ENCODE measurements at regions of chr22 and their contacts with region 1.

Region 1: DNA sequence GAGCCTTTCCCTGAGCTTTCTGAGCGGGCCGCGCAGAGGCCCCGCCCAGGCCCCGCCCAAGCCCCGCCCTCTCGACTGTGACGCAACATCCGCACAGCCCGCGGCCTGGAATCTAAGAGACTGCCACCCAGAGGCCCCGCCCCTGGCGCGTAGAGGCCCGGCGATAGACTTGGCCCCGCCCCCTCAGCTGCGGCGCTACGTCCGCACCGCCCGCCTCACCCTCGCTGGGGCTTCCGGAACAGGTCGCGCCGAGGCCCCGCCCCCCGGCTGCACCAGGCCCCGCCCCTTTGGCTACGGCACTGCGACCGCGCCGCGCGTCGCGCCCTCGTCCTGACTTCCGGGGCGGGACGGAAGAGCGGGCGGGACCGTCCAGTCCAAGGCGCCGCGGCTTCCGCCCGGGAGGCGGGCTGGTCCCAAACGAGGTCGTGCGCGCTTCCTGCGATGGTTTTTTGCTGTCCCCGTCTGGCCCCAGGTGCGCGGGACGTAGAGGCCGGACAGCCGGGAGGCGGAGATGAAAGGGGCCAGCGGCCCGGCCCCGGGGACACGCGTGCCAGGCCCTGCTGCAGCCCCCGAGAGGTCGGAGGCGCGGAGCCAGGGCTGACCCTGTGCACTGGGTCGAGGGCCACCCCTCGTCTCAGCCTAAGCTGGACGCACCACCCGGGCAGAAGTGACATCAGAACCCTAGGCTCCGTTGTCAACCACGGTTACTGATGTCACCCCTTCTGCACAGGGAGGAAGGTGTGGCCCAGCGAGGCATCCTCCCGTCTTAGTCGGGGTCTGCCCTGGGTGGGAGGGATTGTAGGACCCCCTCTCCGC is 59.0 kb upstream of the WNT7B start:
- H3K4me3 ChIP-seq: peak overlapping the region; percentile 83
- H3K27ac ChIP-seq: peak overlapping the region; percentile 80
- H3K4me1 ChIP-seq: peaks cover 5% of the 10 kb centered on the region
- CTCF ChIP-seq: no peak

Region 2: DNA sequence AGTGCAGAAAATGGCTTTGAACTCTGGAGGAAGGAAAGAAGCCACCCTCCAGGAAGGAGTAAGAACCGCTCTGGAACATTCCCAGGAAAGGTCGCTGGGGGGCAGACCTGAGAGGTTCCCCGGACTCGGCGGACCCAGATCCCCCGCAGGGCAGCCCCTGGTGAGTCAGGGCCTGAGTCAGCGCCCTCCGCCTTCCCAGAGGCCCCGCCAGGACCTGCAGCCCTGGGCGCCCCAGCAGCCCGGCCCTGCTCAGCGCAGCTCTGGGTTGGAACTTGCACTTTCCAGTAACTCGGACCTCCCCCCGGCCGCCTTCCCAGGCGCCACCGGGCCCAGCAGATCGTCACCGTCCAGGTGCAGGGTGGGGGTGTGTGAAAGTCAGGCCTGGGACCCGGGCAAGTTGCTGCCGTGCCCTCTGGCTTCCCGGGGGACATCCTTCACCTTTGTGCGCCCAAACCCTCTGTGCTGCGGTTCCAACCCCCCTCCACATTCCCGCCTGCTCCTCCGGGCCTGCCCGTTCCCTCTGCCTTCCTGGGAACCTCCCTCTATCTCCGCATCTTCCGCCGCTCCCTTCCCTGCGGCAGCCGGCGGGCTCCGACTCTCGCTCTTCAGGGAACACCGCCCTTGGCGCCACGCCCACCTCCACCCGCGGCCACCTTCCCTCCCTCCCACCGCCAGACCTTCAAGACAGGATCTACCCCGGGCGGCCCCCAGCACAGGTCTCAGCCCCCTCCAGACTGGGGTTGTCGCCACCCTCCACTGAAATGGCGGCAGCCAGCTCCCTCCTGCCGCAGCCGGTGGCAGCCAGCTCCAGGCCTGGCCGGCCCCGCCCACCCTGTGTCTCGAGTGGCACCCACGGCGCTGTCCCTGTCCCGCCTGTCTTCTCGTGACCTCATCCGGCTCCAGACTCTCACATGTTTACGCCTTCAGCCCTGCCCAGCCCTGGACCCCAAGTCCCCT is 22.2 kb before region 1 on chr22:
- CTCF ChIA-PET with region 1: interaction called, 101 read pairs
- POLR2A ChIA-PET with region 1: interaction called, 41 read pairs
- H3K4me3 ChIP-seq: peak overlapping the region; percentile 67
- H3K27ac ChIP-seq: peak overlapping the region; percentile 88
- H3K4me1 ChIP-seq: peaks cover 5% of the 10 kb centered on the region; the same call in 1 of the 2 replicates
- CTCF ChIP-seq: peak; percentile 88

Region 3: DNA sequence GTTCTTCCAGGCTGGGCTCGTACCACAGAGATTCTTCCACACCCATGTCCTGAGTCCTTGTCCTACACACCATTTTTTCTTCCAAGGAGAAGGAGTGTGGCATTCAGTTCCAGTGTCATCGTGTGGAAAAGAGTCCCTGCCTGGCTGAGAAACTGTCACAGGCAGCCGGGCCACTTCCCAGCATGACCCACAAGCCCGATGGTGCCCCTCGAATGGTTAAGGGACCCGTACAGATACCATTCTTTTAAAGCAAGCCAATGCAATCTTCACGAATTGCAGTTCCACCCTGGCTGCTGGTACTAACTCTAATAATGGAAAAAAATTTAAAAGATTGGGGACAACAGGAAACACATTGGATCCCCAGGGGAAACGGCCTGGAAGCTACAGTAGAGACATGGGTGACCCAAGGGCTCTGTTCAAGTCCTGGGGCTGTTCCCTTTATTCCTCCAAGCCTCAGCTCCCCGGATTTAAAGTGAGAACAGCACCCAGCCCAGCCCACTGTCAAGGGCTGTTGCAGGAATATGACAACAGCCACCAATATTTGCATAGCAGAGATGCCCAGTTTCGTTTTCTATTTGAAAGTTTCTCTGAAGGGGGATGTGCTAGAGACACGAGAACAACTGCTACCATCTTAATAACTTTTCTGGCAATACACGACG is 21.9 kb after region 1 on chr22:
- CTCF ChIA-PET with region 1: no interaction called
- POLR2A ChIA-PET with region 1: interaction called, 30 read pairs
- H3K4me3 ChIP-seq: no peak overlapping the region
- H3K27ac ChIP-seq: no peak overlapping the region
- H3K4me1 ChIP-seq: peaks cover 11% of the 10 kb centered on the region
- CTCF ChIP-seq: no peak

Region 4: GRCh38 chr22:46071451-46072109 is 35.6 kb after region 1 on chr22:
- CTCF ChIA-PET with region 1: interaction called, 3 read pairs
- POLR2A ChIA-PET with region 1: interaction called, 39 read pairs
- H3K4me3 ChIP-seq: peak overlapping the region; percentile 99
- H3K27ac ChIP-seq: peak overlapping the region; percentile 100
- H3K4me1 ChIP-seq: peaks cover 25% of the 10 kb centered on the region
- CTCF ChIP-seq: no peak

Measured in HEK293 (cell line).